CD4-positive, alpha-beta memory T cell (primary cell): ENCODE measurements at regions of chr1 and their contacts with region 1.

Region 1: GRCh38 chr1:160997323-160998038 is 23.5 kb downstream of the F11R start:
- DNase-seq: peak in 4 of 5 donors; percentile 30 to 42 (median 38)
- H3K4me3 ChIP-seq: no peak overlapping the region
- H3K4me3 Mint-ChIP-seq: no peak overlapping the region
- H3K27ac ChIP-seq: no peak overlapping the region
- H3K27ac Mint-ChIP-seq: peak overlapping the region; percentile 22 to 93 (median 84)
- H3K4me1 ChIP-seq: peaks cover 8% of the 10 kb centered on the region
- H3K4me1 Mint-ChIP-seq: peaks cover 4 to 8% (median 5%) of the 10 kb centered on the region in 4 donors
- H3K27me3 ChIP-seq: no peaks in the 10 kb centered on the region
- H3K27me3 Mint-ChIP-seq: no peaks in the 10 kb centered on the region

Region 2: GRCh38 chr1:159291424-159291823 is 1706.1 kb before region 1 on chr1:
- CTCF ChIA-PET with region 1: no interaction called
- POLR2A ChIA-PET with region 1: no interaction called
- intact Hi-C with region 1: no loop called
- DNase-seq: no peak
- H3K4me3 ChIP-seq: no peak overlapping the region
- H3K4me3 Mint-ChIP-seq: no peak overlapping the region
- H3K27ac ChIP-seq: no peak overlapping the region
- H3K27ac Mint-ChIP-seq: no peak overlapping the region
- H3K4me1 ChIP-seq: no peaks in the 10 kb centered on the region
- H3K4me1 Mint-ChIP-seq: no peaks in the 10 kb centered on the region
- H3K27me3 ChIP-seq: no peaks in the 10 kb centered on the region
- H3K27me3 Mint-ChIP-seq: peaks cover 1 to 12% of the 10 kb centered on the region in 2 donors

Region 3: GRCh38 chr1:161013488-161014230 is 16.2 kb after region 1 on chr1:
- CTCF ChIA-PET with region 1: interaction called, 43 read pairs
- POLR2A ChIA-PET with region 1: interaction called, 14 read pairs
- intact Hi-C with region 1: no loop called
- DNase-seq: peak; percentile 58 to 76 (median 63)
- H3K4me3 ChIP-seq: peak overlapping the region; percentile 14 to 53
- H3K4me3 Mint-ChIP-seq: peak overlapping the region; percentile 74 to 91 (median 84)
- H3K27ac ChIP-seq: peak overlapping the region; percentile 58
- H3K27ac Mint-ChIP-seq: peak overlapping the region; percentile 88 to 97 (median 94)
- H3K4me1 ChIP-seq: peaks cover 37% of the 10 kb centered on the region
- H3K4me1 Mint-ChIP-seq: peaks cover 24 to 56% (median 34%) of the 10 kb centered on the region in 4 donors
- H3K27me3 ChIP-seq: no peaks in the 10 kb centered on the region
- H3K27me3 Mint-ChIP-seq: no peaks in the 10 kb centered on the region

Region 4: GRCh38 chr1:161021165-161021960 is 23.9 kb after region 1 on chr1:
- CTCF ChIA-PET with region 1: interaction called, 24 read pairs
- POLR2A ChIA-PET with region 1: interaction called, 7 read pairs
- intact Hi-C with region 1: no loop called
- DNase-seq: peak; percentile 88 to 98 (median 91)
- H3K4me3 ChIP-seq: peak overlapping the region; percentile 40 to 72
- H3K4me3 Mint-ChIP-seq: peak overlapping the region; percentile 89 to 97 (median 94)
- H3K27ac ChIP-seq: peak overlapping the region; percentile 72
- H3K27ac Mint-ChIP-seq: peak overlapping the region; percentile 86 to 99 (median 96)
- H3K4me1 ChIP-seq: peaks cover 36% of the 10 kb centered on the region
- H3K4me1 Mint-ChIP-seq: peaks cover 24 to 58% (median 35%) of the 10 kb centered on the region in 4 donors
- H3K27me3 ChIP-seq: no peaks in the 10 kb centered on the region
- H3K27me3 Mint-ChIP-seq: no peaks in the 10 kb centered on the region

Region 5: GRCh38 chr1:161038523-161039153 is 41.2 kb after region 1 on chr1 and contains the start of gene TSTD1:
- CTCF ChIA-PET with region 1: interaction called, 29 read pairs
- POLR2A ChIA-PET with region 1: interaction called, 5 read pairs
- intact Hi-C with region 1: loop called (anchors 5 kb)
- DNase-seq: peak; percentile 88 to 95 (median 89)
- H3K4me3 ChIP-seq: peak within 1 kb of the TSS; percentile 65 to 96
- H3K4me3 Mint-ChIP-seq: peak within 1 kb of the TSS; percentile 87 to 95 (median 91)
- H3K27ac ChIP-seq: peak within 1 kb of the TSS; percentile 83
- H3K27ac Mint-ChIP-seq: peak within 1 kb of the TSS; percentile 89 to 99 (median 97)
- H3K4me1 ChIP-seq: peaks cover 47% of the 10 kb centered on the region
- H3K4me1 Mint-ChIP-seq: peaks cover 25 to 56% (median 38%) of the 10 kb centered on the region in 4 donors
- H3K27me3 ChIP-seq: no peaks in the 10 kb centered on the region
- H3K27me3 Mint-ChIP-seq: no peaks in the 10 kb centered on the region
- total RNA-seq, gene TSTD1: 92.0 to 93.1 TPM

Region 6: DNA sequence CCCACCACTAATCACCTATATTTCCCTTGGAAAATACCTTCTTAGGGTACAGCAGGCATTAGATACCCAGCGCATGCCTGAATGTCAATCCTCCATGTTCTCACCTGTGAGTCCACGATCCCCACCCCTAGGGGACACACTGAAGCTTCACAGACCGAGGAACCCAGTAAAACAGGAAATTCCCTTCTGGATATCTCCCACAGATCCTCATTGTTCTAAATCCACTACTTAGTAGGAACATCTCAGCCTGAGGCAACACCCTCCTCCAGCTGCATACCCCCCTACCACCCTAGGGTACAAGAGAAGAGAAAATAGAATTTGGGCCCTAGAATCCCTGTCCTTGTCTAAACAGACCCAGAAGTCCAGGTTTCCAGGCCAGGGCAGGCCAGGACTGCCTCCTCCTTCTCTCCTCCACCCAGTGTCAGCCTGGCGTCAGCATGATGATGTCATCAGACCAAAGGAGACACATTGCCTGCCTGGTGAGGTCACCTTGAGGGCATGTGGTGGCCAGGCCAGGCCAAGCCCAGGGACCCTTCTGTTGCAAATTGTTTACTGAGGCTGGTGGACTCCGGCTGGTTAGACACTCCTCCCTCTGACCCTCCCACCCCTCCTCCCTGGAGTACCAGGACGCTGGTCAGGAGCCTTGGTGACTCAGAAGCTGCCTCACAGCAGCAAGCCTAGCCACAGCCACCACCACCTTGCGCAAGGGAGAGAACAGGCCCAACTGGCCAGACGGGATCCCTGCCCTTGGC is 85.7 kb after region 1 on chr1:
- CTCF ChIA-PET with region 1: interaction called, 14 read pairs
- POLR2A ChIA-PET with region 1: no interaction called
- intact Hi-C with region 1: no loop called
- DNase-seq: no peak
- H3K4me3 ChIP-seq: no peak overlapping the region
- H3K4me3 Mint-ChIP-seq: no peak overlapping the region
- H3K27ac ChIP-seq: no peak overlapping the region
- H3K27ac Mint-ChIP-seq: peak overlapping the region in 1 of 7 donors; percentile 19
- H3K4me1 ChIP-seq: no peaks in the 10 kb centered on the region
- H3K4me1 Mint-ChIP-seq: no peaks in the 10 kb centered on the region
- H3K27me3 ChIP-seq: no peaks in the 10 kb centered on the region
- H3K27me3 Mint-ChIP-seq: no peaks in the 10 kb centered on the region

Region 7: GRCh38 chr1:161139765-161140164 is 142.3 kb after region 1 on chr1:
- CTCF ChIA-PET with region 1: interaction called, 68 read pairs
- POLR2A ChIA-PET with region 1: no interaction called
- intact Hi-C with region 1: loop called (anchors 1 kb)
- DNase-seq: peak; percentile 41 to 54 (median 51)
- H3K4me3 ChIP-seq: no peak overlapping the region
- H3K4me3 Mint-ChIP-seq: no peak overlapping the region
- H3K27ac ChIP-seq: no peak overlapping the region
- H3K27ac Mint-ChIP-seq: no peak overlapping the region
- H3K4me1 ChIP-seq: no peaks in the 10 kb centered on the region
- H3K4me1 Mint-ChIP-seq: peaks cover 0 to 4% (median 2%) of the 10 kb centered on the region in 4 donors
- H3K27me3 ChIP-seq: no peaks in the 10 kb centered on the region
- H3K27me3 Mint-ChIP-seq: no peaks in the 10 kb centered on the region

Region 8: DNA sequence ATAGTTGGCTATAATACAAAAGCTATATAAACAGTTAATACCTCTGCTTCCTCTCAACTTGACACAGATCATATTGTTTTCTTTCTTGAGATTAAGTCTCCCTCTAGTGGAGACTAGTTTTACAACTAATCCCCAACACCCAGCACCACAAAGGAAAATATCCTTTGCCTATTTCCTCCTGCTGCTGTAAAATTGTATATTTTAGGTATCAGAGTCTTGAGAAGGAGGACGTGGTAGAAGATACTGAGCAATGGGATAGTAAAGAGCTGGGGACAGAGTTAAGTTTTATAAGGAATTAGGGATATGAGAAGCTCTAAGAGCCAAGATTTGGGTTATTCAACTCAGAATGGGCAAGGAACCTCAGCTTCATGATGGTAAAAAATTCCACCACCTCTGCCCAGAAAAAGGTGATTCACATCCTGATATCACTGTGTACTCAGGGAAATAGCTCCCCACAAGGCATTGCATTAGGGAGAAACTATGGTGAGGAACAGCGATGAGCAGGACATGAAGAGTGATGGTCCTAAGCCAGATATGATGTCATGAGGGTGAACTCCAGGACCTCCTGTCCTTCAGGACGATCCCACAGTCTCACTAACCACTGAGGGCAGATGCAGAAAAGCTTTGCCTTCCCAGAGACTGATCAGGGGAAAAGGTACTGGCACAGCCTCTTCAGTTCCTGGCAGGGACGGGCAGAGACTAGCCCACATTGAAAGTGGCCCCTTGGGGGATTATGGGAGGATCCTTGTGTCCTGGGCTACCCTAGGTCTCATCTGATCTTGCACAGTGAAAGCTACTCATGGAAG is 384.9 kb after region 1 on chr1:
- CTCF ChIA-PET with region 1: interaction called, 4 read pairs
- POLR2A ChIA-PET with region 1: no interaction called
- intact Hi-C with region 1: loop called (anchors 5 kb)
- DNase-seq: peak in 4 of 5 donors; percentile 48 to 61 (median 56)
- H3K4me3 ChIP-seq: no peak overlapping the region
- H3K4me3 Mint-ChIP-seq: no peak overlapping the region
- H3K27ac ChIP-seq: no peak overlapping the region
- H3K27ac Mint-ChIP-seq: peak overlapping the region in 3 of 7 donors; percentile 3 to 76 (median 7)
- H3K4me1 ChIP-seq: peaks cover 17% of the 10 kb centered on the region
- H3K4me1 Mint-ChIP-seq: peaks cover 7 to 14% (median 13%) of the 10 kb centered on the region in 4 donors
- H3K27me3 ChIP-seq: no peaks in the 10 kb centered on the region
- H3K27me3 Mint-ChIP-seq: no peaks in the 10 kb centered on the region